ENCODE measurements at regions of chr6 and their contacts with region 1.

Region 1: DNA sequence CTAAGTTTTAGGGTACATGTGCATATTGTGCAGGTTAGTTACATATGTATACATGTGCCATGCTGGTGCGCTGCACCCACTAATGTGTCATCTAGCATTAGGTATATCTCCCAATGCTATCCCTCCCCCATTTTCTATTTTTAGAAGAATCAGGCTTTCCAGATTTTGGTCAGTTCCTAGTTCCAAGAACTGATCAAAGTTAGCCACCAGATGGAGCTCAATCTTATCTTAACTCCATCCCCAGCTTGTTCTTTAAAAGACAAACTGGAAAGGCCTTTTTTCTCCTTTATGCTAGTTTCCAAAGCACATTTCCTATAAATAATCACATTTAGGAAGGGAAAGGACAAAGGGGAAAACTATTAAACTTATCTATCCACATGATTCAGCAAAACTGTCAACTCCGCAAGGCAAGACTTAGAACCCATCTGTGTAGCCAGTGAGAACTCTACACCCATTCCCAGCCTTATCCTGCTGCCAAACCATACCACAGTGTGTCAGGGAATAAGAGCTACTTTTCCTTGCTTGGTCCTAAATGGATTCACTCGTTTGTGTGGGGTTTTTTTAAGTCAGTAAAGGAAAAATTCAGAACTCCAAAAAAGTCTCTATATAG is 22.8 kb upstream of the KHDC1 start:
- DNase-seq: no peak
- H3K4me3 ChIP-seq: no peak overlapping the region
- H3K27ac ChIP-seq: no peak overlapping the region
- H3K4me1 ChIP-seq: no peaks in the 10 kb centered on the region
- H3K27me3 ChIP-seq: no peaks in the 10 kb centered on the region
- CTCF ChIP-seq: peak; percentile 11 to 53 (median 44)
- POLR2A ChIP-seq: no peak

Region 2: GRCh38 chr6:73329201-73329600 is 43.4 kb after region 1 on chr6:
- intact Hi-C with region 1: loop called in 1 of 2 experiments (anchors 5 kb)
- DNase-seq: no peak
- H3K4me3 ChIP-seq: no peak overlapping the region
- H3K27ac ChIP-seq: no peak overlapping the region
- H3K4me1 ChIP-seq: no peaks in the 10 kb centered on the region
- H3K27me3 ChIP-seq: no peaks in the 10 kb centered on the region
- CTCF ChIP-seq: no peak
- POLR2A ChIP-seq: no peak